T-cell (primary cell): ENCODE measurements at regions of chr6 and their contacts with region 1.

Region 1: GRCh38 chr6:6724539-6725467 is 136.3 kb downstream of the LY86 start:
- DNase-seq: peak in 34 of 35 experiments; percentile 16 to 73 (median 48)
- ATAC-seq: peak; percentile 77 to 99 (median 80)
- H3K4me3 ChIP-seq: peak overlapping the region; percentile 7 to 14
- H3K4me3 Mint-ChIP-seq: peak overlapping the region; percentile 60 to 69 (median 66)
- H3K27ac ChIP-seq: no peak overlapping the region
- H3K27ac Mint-ChIP-seq: no peak overlapping the region
- H3K4me1 ChIP-seq: peaks cover 0 to 17% of the 10 kb centered on the region in 2 experiments
- H3K4me1 Mint-ChIP-seq: peaks cover 4 to 17% (median 7%) of the 10 kb centered on the region in 3 donors
- H3K27me3 ChIP-seq: peaks cover 0 to 22% of the 10 kb centered on the region in 2 experiments
- H3K27me3 Mint-ChIP-seq: peaks cover 0 to 11% of the 10 kb centered on the region in 2 donors

Region 2: GRCh38 chr6:7270320-7271204 is 545.8 kb after region 1 on chr6:
- CTCF ChIA-PET with region 1: interaction called in 1 of 2 experiments, 13 read pairs
- POLR2A ChIA-PET with region 1: no interaction called
- DNase-seq: no peak
- ATAC-seq: no peak
- H3K4me3 ChIP-seq: no peak overlapping the region
- H3K4me3 Mint-ChIP-seq: no peak overlapping the region
- H3K27ac ChIP-seq: no peak overlapping the region
- H3K27ac Mint-ChIP-seq: no peak overlapping the region
- H3K4me1 ChIP-seq: no peaks in the 10 kb centered on the region
- H3K4me1 Mint-ChIP-seq: peaks cover under 1 to 1% (median under 1%) of the 10 kb centered on the region in 3 donors
- H3K27me3 ChIP-seq: peaks cover 0 to 20% of the 10 kb centered on the region in 2 experiments
- H3K27me3 Mint-ChIP-seq: peaks cover 0 to 7% of the 10 kb centered on the region in 2 donors